WTC11 (cell line): ENCODE measurements at regions of chr5 and their contacts with region 1.

Region 1: DNA sequence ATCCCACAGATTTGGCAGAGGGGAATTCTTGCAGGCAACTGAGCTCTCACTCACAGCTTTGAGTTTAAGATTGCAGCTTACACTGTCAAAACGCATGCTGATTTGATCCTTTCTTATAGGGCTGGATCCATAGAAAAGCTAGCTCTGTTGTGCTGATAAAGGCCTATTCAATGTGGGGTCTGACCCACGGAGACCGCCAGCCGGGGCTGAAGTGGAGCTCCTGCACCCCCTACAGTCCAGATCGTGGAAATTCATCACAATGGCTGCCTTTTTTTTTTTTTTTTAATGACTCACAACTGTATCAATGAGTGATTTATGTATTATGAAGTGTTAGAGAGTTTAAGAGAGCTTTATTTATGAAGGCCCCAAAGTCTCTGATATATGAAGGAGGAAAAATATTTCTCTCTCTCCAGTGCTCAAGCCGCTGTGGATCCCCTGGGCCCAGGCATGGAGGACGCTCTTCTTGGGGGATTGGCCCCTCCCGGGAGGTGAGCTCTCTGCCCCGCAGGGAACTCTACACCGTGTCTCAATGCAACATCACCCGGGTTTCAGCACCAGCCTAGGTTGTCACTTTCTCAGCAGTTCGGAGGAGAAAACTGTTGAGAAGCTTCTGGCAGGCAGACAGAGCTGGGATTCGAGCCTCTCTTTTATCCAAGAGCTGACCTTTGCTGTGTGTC is 700.2 kb downstream of the IRX1 start:
- DNase-seq: peak; percentile 59
- ATAC-seq: peak; percentile 94
- H3K4me3 Mint-ChIP-seq: peak overlapping the region; percentile 11; the same call in 1 of the 2 replicates
- H3K27ac Mint-ChIP-seq: no peak overlapping the region
- H3K4me1 Mint-ChIP-seq: peaks cover 14% of the 10 kb centered on the region
- H3K27me3 Mint-ChIP-seq: no peaks in the 10 kb centered on the region
- CTCF ChIP-seq: peak; percentile 60

Region 2: DNA sequence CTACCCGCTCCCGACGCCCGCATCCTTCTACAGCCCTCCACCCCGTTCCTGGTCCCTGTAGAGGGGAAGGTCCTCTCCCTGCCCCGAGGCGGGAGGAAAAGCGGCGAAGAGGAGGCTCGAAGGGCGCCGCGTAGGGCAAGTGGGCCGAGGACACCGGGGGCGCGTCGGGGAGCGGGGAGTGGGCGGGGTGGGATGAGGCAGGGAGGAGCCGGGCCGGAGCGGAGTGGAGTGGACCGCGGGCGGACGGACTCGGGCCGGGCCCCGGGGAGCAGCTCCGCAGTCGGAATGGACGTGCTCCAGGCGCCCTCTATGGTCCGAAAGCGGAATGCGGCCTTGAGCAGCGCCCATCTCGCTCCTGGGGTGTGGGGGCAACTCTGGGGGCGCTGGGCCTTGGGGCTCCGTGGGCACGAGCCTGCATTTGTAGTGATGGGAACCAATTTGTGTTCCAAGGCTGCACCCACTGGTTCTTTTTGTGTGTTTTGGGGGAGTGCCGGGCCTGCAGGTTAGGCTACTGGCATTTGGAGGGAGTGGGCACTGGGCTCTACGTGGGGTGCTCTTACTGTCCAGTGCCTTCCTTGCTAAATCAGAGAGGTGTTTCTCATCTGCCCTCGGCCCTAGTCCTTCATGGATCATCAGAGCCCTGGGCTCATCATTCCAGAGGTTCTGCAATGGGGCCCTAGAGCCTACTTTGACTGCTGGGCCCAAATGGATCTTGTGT is 692.9 kb before region 1 on chr5:
- CTCF ChIA-PET with region 1: interaction called, 17 read pairs
- POLR2A ChIA-PET with region 1: no interaction called
- DNase-seq: peak; percentile 77
- ATAC-seq: peak; percentile 31
- H3K4me3 Mint-ChIP-seq: peak overlapping the region; percentile 69
- H3K27ac Mint-ChIP-seq: no peak overlapping the region
- H3K4me1 Mint-ChIP-seq: peaks cover 31% of the 10 kb centered on the region
- H3K27me3 Mint-ChIP-seq: peaks cover 99% of the 10 kb centered on the region
- CTCF ChIP-seq: peak; percentile 78

Region 3: DNA sequence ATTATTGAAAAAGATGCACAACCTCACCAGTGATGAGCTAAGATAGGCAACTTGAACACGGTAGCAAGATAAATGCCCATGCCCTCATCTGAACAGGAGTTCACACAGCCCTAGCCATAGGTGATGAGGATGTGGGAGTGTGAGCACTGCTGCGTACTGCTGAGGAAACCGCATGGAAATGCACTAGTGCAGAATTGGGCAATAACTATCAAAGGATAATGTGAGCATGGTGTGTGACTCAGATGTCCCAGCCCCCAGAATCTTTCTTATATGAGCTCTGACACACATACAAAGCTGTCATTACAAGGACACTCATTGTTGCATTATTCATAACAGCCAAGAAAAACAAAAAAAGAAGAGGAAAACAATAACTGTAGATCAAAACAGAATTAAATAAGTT is 179.0 kb before region 1 on chr5:
- CTCF ChIA-PET with region 1: interaction called, 11 read pairs
- POLR2A ChIA-PET with region 1: no interaction called
- DNase-seq: no peak
- ATAC-seq: no peak
- H3K4me3 Mint-ChIP-seq: no peak overlapping the region
- H3K27ac Mint-ChIP-seq: no peak overlapping the region
- H3K4me1 Mint-ChIP-seq: peaks cover 3% of the 10 kb centered on the region; the same call in 1 of the 2 replicates
- H3K27me3 Mint-ChIP-seq: no peaks in the 10 kb centered on the region
- CTCF ChIP-seq: no peak

Region 4: GRCh38 chr5:4199049-4199841 is 96.6 kb before region 1 on chr5:
- CTCF ChIA-PET with region 1: interaction called, 20 read pairs
- POLR2A ChIA-PET with region 1: no interaction called
- DNase-seq: peak; percentile 23
- ATAC-seq: peak; percentile 75
- H3K4me3 Mint-ChIP-seq: no peak overlapping the region
- H3K27ac Mint-ChIP-seq: no peak overlapping the region; the same call in 1 of the 2 replicates
- H3K4me1 Mint-ChIP-seq: peaks cover 43% of the 10 kb centered on the region
- H3K27me3 Mint-ChIP-seq: peaks cover 6% of the 10 kb centered on the region
- CTCF ChIP-seq: no peak

Region 5: DNA sequence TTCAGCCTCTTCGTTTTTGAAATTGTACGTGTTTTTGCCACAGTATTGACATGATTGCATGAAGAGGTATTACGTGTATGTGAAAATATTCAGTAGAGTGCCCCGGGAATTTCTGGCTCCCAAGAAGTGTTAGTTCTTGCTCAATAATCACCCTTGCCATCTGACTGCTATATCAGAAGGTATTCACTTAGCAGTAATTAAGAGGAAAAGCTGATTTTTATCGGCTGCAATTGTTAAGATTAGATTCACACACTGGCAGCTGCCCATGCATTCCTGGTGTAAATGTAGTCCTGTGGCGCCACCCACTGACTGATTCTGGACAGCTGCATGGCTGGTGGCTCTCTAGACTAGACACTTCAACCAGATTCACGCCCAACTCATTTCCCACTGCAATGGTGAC is 404.3 kb after region 1 on chr5:
- CTCF ChIA-PET with region 1: interaction called, 13 read pairs
- POLR2A ChIA-PET with region 1: no interaction called
- DNase-seq: peak; percentile 85
- ATAC-seq: peak; percentile 92
- H3K4me3 Mint-ChIP-seq: no peak overlapping the region
- H3K27ac Mint-ChIP-seq: no peak overlapping the region
- H3K4me1 Mint-ChIP-seq: no peaks in the 10 kb centered on the region
- H3K27me3 Mint-ChIP-seq: no peaks in the 10 kb centered on the region
- CTCF ChIP-seq: 0 out of 2 replicates have a peak, but pooled peaks have one; percentile 44